Endothelial cell of umbilical vein (primary cell): ENCODE measurements at regions of chr7 and their contacts with region 1.

Region 1: GRCh38 chr7:128862571-128863432 is at the start of gene ATP6V1F:
- DNase-seq: peak; percentile 100
- H3K4me3 ChIP-seq: peak within 1 kb of the TSS; percentile 48 to 67 (median 62)
- H3K27ac ChIP-seq: peak within 1 kb of the TSS; percentile 57
- H3K4me1 ChIP-seq: peaks cover 9% of the 10 kb centered on the region
- H3K27me3 ChIP-seq: no peaks in the 10 kb centered on the region
- CTCF ChIP-seq: no peak
- POLR2A ChIP-seq: peak; percentile 91
- total RNA-seq, gene ATP6V1F: 141 and 156 TPM in 2 replicates

Region 2: DNA sequence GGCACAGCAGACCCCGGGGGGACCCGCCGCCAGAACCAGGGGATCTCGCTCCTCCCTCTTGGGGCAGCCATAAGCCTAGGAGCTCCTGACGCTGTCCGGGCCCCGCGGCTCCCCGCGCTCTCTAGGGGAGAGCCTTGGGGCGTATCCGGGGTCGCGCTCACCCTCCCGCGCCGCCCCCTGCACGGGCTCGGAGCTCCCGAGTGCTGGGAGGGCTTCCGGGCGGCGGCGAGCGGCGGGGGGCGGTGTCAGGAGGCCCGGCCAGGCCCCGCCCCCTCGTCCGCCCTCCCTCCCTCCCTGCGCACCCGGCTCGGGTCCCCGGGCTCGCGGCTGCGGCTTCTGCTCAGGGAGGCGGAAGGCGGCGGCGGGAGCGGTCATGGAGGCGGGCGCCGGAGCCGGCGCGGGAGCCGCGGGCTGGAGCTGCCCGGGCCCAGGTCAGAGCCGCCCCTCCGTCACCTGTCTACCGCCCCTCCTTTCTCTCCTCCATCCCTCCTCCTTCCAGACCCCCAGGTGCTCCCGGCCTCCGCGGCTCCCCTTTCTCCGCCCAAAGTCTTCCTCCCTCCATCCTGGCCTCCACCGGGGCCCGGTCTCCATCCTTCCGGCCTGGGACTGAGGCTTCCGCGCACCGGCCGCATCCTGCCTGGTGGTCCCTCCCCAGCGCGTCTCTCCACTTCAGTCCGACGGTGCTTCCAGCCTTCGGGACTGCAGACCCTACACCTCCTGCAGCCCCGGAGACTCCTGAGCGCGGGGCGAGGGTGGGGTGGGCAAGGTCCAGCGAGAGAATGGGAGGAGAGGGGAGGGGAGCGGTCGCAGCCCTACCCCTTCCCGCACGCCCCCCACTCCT is 71.5 kb before region 1 on chr7:
- CTCF ChIA-PET with region 1: no interaction called
- POLR2A ChIA-PET with region 1: no interaction called
- dilution Hi-C with region 1: no loop called
- intact Hi-C with region 1: loop called (anchors 1 kb)
- DNase-seq: peak; percentile 43
- H3K4me3 ChIP-seq: peak overlapping the region; percentile 55 to 80 (median 55)
- H3K27ac ChIP-seq: no peak overlapping the region
- H3K4me1 ChIP-seq: peaks cover 4% of the 10 kb centered on the region
- H3K27me3 ChIP-seq: peaks cover 16 to 32% of the 10 kb centered on the region in 2 experiments
- CTCF ChIP-seq: no peak
- POLR2A ChIP-seq: no peak